Heart right ventricle (tissue), 16 donors: ENCODE measurements at regions of chr15 and their contacts with region 1.

Region 1: GRCh38 chr15:74438721-74439316 is 5.1 kb upstream of the SEMA7A start:
- DNase-seq: peak; percentile 60 to 66
- ATAC-seq: peak; percentile 43 to 73 (median 64)
- H3K4me3 ChIP-seq: no peak overlapping the region
- H3K27ac ChIP-seq: no peak overlapping the region
- H3K4me1 ChIP-seq: peaks cover 0 to 32% (median 8%) of the 10 kb centered on the region in 9 donors
- H3K27me3 ChIP-seq: no peaks in the 10 kb centered on the region
- CTCF ChIP-seq: peak; percentile 82 to 95 (median 92)

Region 2: GRCh38 chr15:74235962-74236361 is 202.9 kb before region 1 on chr15 and contains the start of gene CCDC33:
- intact Hi-C with region 1: no loop called
- DNase-seq: no peak
- ATAC-seq: no peak
- H3K4me3 ChIP-seq: no peak within 1 kb of the TSS
- H3K27ac ChIP-seq: no peak within 1 kb of the TSS
- H3K4me1 ChIP-seq: peaks cover 15 to 21% (median 18%) of the 10 kb centered on the region in 9 donors
- H3K27me3 ChIP-seq: no peaks in the 10 kb centered on the region
- CTCF ChIP-seq: no peak
- total RNA-seq, gene CCDC33: not detected

Region 3: GRCh38 chr15:74489518-74490338 is 50.9 kb after region 1 on chr15:
- intact Hi-C with region 1: loop called in 1 of 10 experiments (anchors 10 kb)
- DNase-seq: peak; percentile 29 to 32
- ATAC-seq: peak in 7 of 8 donors; percentile 23 to 68 (median 56)
- H3K4me3 ChIP-seq: no peak overlapping the region
- H3K27ac ChIP-seq: no peak overlapping the region
- H3K4me1 ChIP-seq: no peaks in the 10 kb centered on the region
- H3K27me3 ChIP-seq: no peaks in the 10 kb centered on the region
- CTCF ChIP-seq: peak; percentile 30 to 76 (median 66)